Activated CD4-positive, alpha-beta T cell treated with anti-CD3 and anti-CD28 coated beads for 36 hours (primary cell): ENCODE measurements at regions of chr2 and their contacts with region 1.

Region 1: GRCh38 chr2:130181325-130181879 is at the start of gene SMPD4:
- DNase-seq: peak; percentile 98
- ATAC-seq: peak; percentile 74
- H3K4me3 Mint-ChIP-seq: peak within 1 kb of the TSS; percentile 95
- H3K27ac Mint-ChIP-seq: peak within 1 kb of the TSS; percentile 90
- H3K4me1 Mint-ChIP-seq: peaks cover 22% of the 10 kb centered on the region
- H3K27me3 Mint-ChIP-seq: no peaks in the 10 kb centered on the region
- total RNA-seq, gene SMPD4: 73.8 to 78.6 TPM

Region 2: GRCh38 chr2:129877289-129877779 is 304.1 kb before region 1 on chr2:
- CTCF ChIA-PET with region 1: no interaction called
- POLR2A ChIA-PET with region 1: no interaction called
- intact Hi-C with region 1: loop called in 1 of 2 experiments (anchors 5 kb)
- DNase-seq: peak; percentile 90
- ATAC-seq: peak; percentile 95
- H3K4me3 Mint-ChIP-seq: peak overlapping the region; percentile 87
- H3K27ac Mint-ChIP-seq: peak overlapping the region; percentile 87
- H3K4me1 Mint-ChIP-seq: peaks cover 11% of the 10 kb centered on the region
- H3K27me3 Mint-ChIP-seq: no peaks in the 10 kb centered on the region

Region 3: GRCh38 chr2:130332271-130333073 is 151.1 kb after region 1 on chr2:
- CTCF ChIA-PET with region 1: interaction called, 7 read pairs
- POLR2A ChIA-PET with region 1: no interaction called
- intact Hi-C with region 1: loop called (anchors 1 to 2 kb)
- DNase-seq: peak; percentile 84
- ATAC-seq: peak; percentile 82
- H3K4me3 Mint-ChIP-seq: peak overlapping the region; percentile 26
- H3K27ac Mint-ChIP-seq: no peak overlapping the region
- H3K4me1 Mint-ChIP-seq: peaks cover 14% of the 10 kb centered on the region
- H3K27me3 Mint-ChIP-seq: peaks cover 25% of the 10 kb centered on the region

Region 4: DNA sequence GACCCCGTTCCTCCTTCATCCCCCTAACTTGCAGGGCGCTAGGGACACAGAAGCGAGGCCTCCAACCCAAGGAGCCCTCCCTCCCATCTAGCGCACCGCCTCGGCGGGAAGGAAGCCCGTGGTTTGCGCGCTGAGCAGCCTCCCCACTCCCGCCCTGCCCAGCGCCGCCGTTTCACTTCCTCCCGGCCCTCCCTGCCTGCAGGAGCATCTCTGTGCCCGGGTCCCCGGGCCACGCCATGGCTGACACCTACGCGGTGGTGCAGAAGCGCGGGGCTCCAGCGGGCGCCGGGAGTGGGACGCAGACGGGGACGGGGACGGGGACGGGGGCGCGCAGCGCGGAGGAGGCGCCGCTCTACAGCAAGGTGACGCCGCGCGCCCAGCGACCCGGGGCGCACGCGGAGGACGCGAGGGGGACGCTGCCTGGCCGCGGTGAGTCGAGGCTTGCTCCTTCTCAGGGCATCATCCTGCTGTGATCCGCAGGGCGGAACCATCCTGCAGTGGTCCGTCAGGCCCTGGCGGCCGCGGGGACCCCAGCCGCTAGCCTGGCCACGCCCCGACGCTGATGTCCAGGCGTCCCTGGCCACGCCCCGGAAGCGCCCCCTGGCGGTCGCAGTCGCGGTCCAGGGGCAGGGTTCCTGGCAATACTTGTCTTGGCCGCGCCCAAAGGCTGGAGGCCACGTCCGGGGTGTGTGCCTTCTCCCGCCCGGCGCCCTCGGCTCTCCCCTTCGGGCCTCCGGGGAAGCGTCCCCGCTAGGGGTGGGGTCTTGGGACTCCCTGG is 190.8 kb after region 1 on chr2:
- CTCF ChIA-PET with region 1: interaction called, 3 read pairs
- POLR2A ChIA-PET with region 1: no interaction called
- intact Hi-C with region 1: loop called in 1 of 2 experiments (anchors 1 kb)
- DNase-seq: peak; percentile 85
- ATAC-seq: peak; percentile 68
- H3K4me3 Mint-ChIP-seq: peak overlapping the region; percentile 84
- H3K27ac Mint-ChIP-seq: peak overlapping the region; percentile 96
- H3K4me1 Mint-ChIP-seq: peaks cover 60% of the 10 kb centered on the region
- H3K27me3 Mint-ChIP-seq: no peaks in the 10 kb centered on the region

Region 5: DNA sequence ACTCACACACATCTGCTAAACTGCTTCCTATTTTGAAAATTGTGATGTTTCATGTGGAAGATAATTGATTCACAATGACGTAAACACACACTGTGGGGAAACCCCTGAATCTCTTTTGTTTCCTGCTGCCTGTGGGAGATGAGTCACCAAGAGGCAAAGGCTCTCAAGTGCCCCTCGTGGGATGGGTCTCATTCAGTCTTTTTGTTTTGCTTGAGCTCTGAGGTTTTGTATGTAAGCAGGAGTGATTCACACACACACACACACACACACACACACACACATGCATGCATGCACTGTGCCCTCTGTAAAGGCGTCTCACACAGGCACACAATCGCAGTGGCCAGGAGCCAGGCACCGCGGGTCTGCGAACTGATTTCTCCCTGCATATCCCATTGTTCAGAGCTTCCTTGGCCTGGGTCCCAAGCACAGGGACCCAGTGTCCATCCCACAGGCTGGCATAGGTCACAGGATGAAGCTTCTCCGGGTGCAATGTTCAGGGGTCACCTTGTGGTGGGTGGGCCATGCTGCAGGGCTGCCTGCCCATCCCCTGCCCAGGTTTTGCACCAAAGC is 643.2 kb after region 1 on chr2:
- CTCF ChIA-PET with region 1: no interaction called
- POLR2A ChIA-PET with region 1: no interaction called
- intact Hi-C with region 1: loop called in 1 of 2 experiments (anchors 2 kb)
- DNase-seq: peak; percentile 80
- ATAC-seq: peak; percentile 95
- H3K4me3 Mint-ChIP-seq: peak overlapping the region; percentile 35
- H3K27ac Mint-ChIP-seq: peak overlapping the region; percentile 89
- H3K4me1 Mint-ChIP-seq: peaks cover 20% of the 10 kb centered on the region
- H3K27me3 Mint-ChIP-seq: no peaks in the 10 kb centered on the region